ENCODE measurements at regions of chr10 and their contacts with region 1.

Region 1: DNA sequence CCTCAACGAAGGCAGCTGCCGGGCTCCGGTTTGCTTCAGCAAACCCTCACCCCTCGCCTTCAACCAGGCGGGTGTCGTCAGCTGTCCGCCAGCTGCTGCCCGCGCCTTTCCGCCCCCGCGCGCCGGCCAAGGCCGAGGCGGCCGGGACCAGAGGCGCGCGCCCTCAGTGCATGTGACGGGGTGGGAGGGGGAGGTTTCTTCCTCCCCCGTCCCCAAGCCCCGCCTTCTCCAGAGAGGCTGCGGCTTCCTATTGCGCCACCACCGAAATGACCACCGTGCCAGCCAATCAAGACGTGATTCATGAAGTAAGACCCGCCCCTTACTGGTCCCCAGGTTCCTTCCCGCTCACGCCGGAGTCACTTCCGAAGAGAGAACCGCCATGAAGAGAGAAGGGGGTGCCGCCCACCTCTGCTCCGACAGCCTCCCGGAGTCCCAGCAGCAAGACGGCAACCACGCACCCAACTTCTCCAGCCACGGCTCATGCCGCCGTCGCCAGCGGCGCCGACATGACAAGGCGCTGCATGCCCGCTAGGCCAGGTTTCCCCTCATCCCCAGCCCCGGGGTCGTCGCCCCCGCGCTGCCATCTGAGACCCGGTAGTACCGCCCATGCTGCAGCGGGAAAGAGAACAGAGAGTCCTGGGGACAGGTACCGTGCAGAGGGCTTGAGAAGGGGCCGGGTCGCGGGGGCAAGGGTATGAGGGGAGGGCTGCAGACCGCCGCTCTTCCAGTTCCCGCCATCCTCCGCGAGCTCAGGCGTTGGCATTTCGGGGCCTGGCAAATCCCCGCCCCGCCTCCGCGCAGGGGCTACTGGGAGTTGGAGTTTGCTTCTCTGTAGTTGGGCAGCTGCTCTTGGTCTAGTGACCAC is at the start of gene SLF2:
- DNase-seq: peak; percentile 94
- H3K4me3 Mint-ChIP-seq: peak within 1 kb of the TSS; percentile 96
- H3K27ac Mint-ChIP-seq: peak within 1 kb of the TSS; percentile 94
- H3K4me1 Mint-ChIP-seq: peaks cover 44% of the 10 kb centered on the region
- H3K27me3 Mint-ChIP-seq: no peaks in the 10 kb centered on the region
- total RNA-seq, gene SLF2: 32.2 and 34.0 TPM in 2 replicates

Region 2: DNA sequence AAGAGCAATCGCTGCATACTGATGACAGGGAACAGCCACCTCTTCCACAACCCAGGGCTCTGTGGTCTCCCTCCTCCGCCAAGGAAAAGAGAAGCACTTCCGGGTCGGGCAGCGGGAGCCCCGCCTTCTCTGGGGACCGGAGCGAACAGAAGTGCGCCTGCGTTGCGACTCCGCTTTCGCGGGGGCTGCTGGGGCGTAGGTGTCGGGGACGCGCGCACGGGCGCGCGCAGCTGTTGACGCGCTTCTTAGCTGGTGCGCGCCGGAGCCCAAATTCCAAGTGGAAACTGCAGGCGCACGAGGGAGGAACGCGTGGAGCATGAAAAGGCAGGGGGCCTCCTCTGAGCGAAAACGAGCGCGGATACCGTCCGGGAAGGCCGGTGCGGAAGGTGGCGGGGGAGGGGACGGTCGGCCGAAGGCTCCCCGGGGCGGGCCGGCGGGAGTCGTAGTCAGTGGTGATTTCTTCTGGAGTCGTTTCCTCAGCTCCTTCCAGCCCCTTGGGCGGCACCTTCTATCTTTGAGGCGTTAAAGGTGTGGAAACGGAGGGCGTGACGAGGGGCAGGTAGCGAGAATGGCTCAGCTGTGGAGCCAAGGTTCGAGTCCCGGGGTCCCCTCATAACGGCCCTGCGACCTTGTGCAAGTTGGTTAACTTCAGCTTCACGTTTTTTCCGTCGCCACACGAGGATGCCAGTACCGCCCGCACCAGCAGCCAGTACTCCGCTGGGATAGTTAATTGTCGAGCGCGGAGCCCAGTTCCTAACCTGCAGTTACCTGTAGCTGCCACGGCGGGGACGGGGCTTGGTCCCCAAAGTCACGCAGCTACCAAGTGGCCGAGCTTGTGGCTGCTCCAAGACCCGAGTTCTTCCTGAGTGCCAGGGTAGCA is 1180.6 kb before region 1 on chr10 and contains the starts of genes COX15 and CUTC:
- intact Hi-C with region 1: loop called (anchors 5 kb)
- DNase-seq: peak; percentile 94
- H3K4me3 Mint-ChIP-seq: peak within 1 kb of the TSS; percentile 99
- H3K27ac Mint-ChIP-seq: peak within 1 kb of the TSS; percentile 99
- H3K4me1 Mint-ChIP-seq: peaks cover 24% of the 10 kb centered on the region
- H3K27me3 Mint-ChIP-seq: no peaks in the 10 kb centered on the region
- total RNA-seq, gene COX15: 33.9 and 35.2 TPM in 2 replicates
- total RNA-seq, gene CUTC: 34.4 and 35.5 TPM in 2 replicates

Region 3: GRCh38 chr10:100847440-100847839 is 65.4 kb before region 1 on chr10:
- intact Hi-C with region 1: loop called (anchors 5 kb)
- DNase-seq: no peak
- H3K4me3 Mint-ChIP-seq: no peak overlapping the region
- H3K27ac Mint-ChIP-seq: peak overlapping the region; percentile 56
- H3K4me1 Mint-ChIP-seq: peaks cover 25% of the 10 kb centered on the region
- H3K27me3 Mint-ChIP-seq: peaks cover 36% of the 10 kb centered on the region